Left colon (tissue), 2 donors: ENCODE measurements at regions of chr4 and their contacts with region 1.

Region 1: GRCh38 chr4:54440394-54441136 is 211.5 kb downstream of the PDGFRA start:
- DNase-seq: no peak
- ATAC-seq: no peak

Region 2: GRCh38 chr4:53981567-53981966 is 459.0 kb before region 1 on chr4:
- intact Hi-C with region 1: no loop called
- DNase-seq: no peak
- ATAC-seq: no peak

Region 3: GRCh38 chr4:54322818-54323417 is 117.6 kb before region 1 on chr4:
- intact Hi-C with region 1: loop called in 1 of 2 experiments (anchors 5 kb)
- DNase-seq: peak; percentile 30 to 69
- ATAC-seq: peak; percentile 80

Region 4: GRCh38 chr4:54359919-54360650 is 80.5 kb before region 1 on chr4:
- intact Hi-C with region 1: no loop called
- DNase-seq: no peak
- ATAC-seq: no peak